CD8-positive, alpha-beta memory T cell (primary cell): ENCODE measurements at regions of chr12 and their contacts with region 1.

Region 1: GRCh38 chr12:110449799-110450497 is at the start of gene ARPC3:
- DNase-seq: peak; percentile 93 to 96 (median 93)
- H3K4me3 ChIP-seq: peak within 1 kb of the TSS; percentile 67
- H3K4me3 Mint-ChIP-seq: peak within 1 kb of the TSS; percentile 94 to 100 (median 99)
- H3K27ac ChIP-seq: peak within 1 kb of the TSS; percentile 88
- H3K27ac Mint-ChIP-seq: peak within 1 kb of the TSS; percentile 86 to 100 (median 99)
- H3K4me1 ChIP-seq: peaks cover 14% of the 10 kb centered on the region
- H3K4me1 Mint-ChIP-seq: peaks cover 33 to 50% (median 46%) of the 10 kb centered on the region in 3 donors
- H3K27me3 ChIP-seq: no peaks in the 10 kb centered on the region
- H3K27me3 Mint-ChIP-seq: peaks cover 0 to 4% of the 10 kb centered on the region in 2 donors
- total RNA-seq, gene ARPC3: 266 to 293 TPM

Region 2: DNA sequence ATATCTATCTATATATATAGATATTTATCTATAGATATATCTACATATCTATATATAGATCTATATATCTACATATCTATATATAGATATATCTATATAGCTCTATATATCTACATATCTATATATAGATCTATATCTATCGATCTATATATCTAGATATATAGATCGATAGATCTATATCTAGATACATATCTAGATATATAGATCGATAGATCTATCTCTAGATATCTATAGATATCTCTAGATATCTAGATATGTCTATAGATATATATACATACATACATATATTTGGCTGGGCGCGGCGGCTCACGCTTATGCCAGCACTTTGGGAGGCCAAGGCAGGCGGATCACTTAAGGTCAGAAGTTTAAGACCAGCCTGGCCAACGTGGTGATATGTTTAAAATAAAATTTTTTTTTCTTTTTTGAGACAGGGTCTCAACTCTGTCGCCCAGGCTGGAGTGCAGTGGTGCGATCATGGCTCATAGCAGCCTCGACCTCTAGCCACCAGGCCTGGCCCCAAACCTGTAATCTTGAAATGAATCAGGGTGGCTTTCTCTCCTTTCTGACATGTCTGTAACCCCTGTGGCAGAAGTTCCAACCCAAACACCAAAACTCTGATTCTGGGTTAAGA is 17.9 kb before region 1 on chr12:
- CTCF ChIA-PET with region 1: interaction called, 22 read pairs
- POLR2A ChIA-PET with region 1: interaction called, 12 read pairs
- DNase-seq: no peak
- H3K4me3 ChIP-seq: no peak overlapping the region
- H3K4me3 Mint-ChIP-seq: peak overlapping the region in 3 of 7 donors; percentile 96 to 100 (median 97)
- H3K27ac ChIP-seq: no peak overlapping the region
- H3K27ac Mint-ChIP-seq: peak overlapping the region in 2 of 8 donors; percentile 6 to 89
- H3K4me1 ChIP-seq: no peaks in the 10 kb centered on the region
- H3K4me1 Mint-ChIP-seq: peaks cover 0 to 3% (median 3%) of the 10 kb centered on the region in 3 donors
- H3K27me3 ChIP-seq: no peaks in the 10 kb centered on the region
- H3K27me3 Mint-ChIP-seq: no peaks in the 10 kb centered on the region

Region 3: DNA sequence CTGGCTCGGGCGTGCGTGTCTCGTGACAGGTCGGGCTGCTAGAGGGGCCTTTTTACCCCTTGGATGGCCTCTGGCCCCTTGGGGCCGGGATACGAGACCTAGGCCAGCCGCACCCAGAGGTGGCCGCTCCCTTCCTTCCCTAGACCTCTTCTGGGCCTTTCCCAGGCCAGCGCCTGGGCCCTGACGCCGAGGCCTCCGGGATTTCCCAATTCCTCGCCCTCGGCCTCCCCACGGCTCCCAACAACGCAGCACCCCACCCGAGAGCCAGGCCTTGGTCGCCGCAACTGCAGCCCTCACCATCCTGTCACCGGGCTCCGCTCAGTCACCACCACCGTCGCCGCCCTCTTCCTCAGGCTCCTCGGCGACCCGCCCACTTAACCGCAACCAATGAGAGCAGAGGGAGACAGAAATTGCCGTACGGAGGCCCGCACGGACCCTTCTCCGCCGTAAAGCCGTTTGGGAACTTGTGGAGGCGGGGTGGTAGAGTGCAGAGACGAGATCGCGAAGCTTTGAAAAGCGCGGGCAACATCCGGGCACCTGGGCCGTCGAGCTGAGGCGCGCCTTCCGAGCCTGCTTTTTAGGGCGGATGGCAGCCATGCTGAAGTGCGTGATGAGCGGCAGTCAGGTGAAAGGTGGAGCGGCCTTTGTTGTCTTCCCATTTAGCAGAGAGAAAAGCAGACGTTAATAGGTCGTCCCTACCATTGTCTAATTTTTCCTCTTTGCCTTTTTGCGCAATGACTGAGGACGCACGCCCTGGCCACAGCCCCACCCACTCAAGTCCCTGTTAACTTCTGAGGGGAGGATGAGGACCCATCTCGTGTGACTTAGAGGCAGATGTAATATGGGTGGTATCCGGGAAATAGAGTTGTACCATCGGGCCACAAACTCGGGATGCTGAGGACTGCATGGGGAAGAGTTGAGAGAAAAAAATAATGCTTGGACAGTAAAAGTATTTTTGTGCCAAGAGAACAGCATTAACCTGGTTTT is 52.1 kb after region 1 on chr12 and contains the starts of genes RAD9B and VPS29:
- CTCF ChIA-PET with region 1: interaction called, 20 read pairs
- POLR2A ChIA-PET with region 1: interaction called, 4 read pairs
- DNase-seq: peak; percentile 98 to 99 (median 99)
- H3K4me3 ChIP-seq: peak within 1 kb of the TSS; percentile 92
- H3K4me3 Mint-ChIP-seq: peak within 1 kb of the TSS; percentile 97 to 99 (median 97)
- H3K27ac ChIP-seq: peak within 1 kb of the TSS; percentile 86
- H3K27ac Mint-ChIP-seq: peak within 1 kb of the TSS; percentile 96 to 98 (median 97)
- H3K4me1 ChIP-seq: peaks cover 29% of the 10 kb centered on the region
- H3K4me1 Mint-ChIP-seq: peaks cover 36 to 50% (median 44%) of the 10 kb centered on the region in 3 donors
- H3K27me3 ChIP-seq: no peaks in the 10 kb centered on the region
- H3K27me3 Mint-ChIP-seq: peaks cover 0 to 3% of the 10 kb centered on the region in 2 donors
- total RNA-seq, gene RAD9B: 0.74 to 1.9 TPM
- total RNA-seq, gene VPS29: 86.4 to 88.3 TPM

Region 4: DNA sequence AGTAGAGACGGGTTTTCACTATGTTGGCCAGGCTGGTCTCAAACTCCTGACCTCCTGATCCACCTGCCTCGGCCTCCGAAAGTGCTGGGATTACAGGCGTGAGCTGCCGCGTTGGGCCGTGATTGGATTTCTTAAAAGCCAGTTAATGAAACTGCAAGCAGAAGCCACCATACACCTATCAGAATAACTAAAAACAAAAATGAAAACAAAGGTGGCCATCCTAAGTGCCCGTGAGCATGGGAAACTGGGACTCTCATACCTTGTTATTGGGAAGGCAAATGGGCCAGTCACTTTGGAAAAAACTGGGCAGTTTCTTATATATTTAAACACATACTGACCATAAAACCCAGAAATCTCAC is 156.3 kb after region 1 on chr12:
- CTCF ChIA-PET with region 1: interaction called, 119 read pairs
- POLR2A ChIA-PET with region 1: interaction called, 27 read pairs
- DNase-seq: no peak
- H3K4me3 ChIP-seq: peak overlapping the region; percentile 55
- H3K4me3 Mint-ChIP-seq: peak overlapping the region; percentile 77 to 93 (median 86)
- H3K27ac ChIP-seq: no peak overlapping the region
- H3K27ac Mint-ChIP-seq: peak overlapping the region in 4 of 8 donors; percentile 67 to 90 (median 87)
- H3K4me1 ChIP-seq: peaks cover 4% of the 10 kb centered on the region
- H3K4me1 Mint-ChIP-seq: peaks cover 6 to 9% (median 6%) of the 10 kb centered on the region in 3 donors
- H3K27me3 ChIP-seq: no peaks in the 10 kb centered on the region
- H3K27me3 Mint-ChIP-seq: no peaks in the 10 kb centered on the region

Region 5: GRCh38 chr12:110888256-110888991 is 438.5 kb after region 1 on chr12:
- CTCF ChIA-PET with region 1: interaction called, 10 read pairs
- POLR2A ChIA-PET with region 1: no interaction called
- DNase-seq: no peak
- H3K4me3 ChIP-seq: no peak overlapping the region
- H3K4me3 Mint-ChIP-seq: peak overlapping the region; percentile 86 to 95 (median 93)
- H3K27ac ChIP-seq: no peak overlapping the region
- H3K27ac Mint-ChIP-seq: peak overlapping the region in 2 of 8 donors; percentile 67 to 89
- H3K4me1 ChIP-seq: no peaks in the 10 kb centered on the region
- H3K4me1 Mint-ChIP-seq: peaks cover 3 to 7% (median 5%) of the 10 kb centered on the region in 3 donors
- H3K27me3 ChIP-seq: no peaks in the 10 kb centered on the region
- H3K27me3 Mint-ChIP-seq: peaks cover 8% of the 10 kb centered on the region in 2 donors

Region 6: GRCh38 chr12:111033281-111034082 is 583.5 kb after region 1 on chr12:
- CTCF ChIA-PET with region 1: no interaction called
- POLR2A ChIA-PET with region 1: no interaction called
- DNase-seq: peak in 1 of 5 donors; percentile 7
- H3K4me3 ChIP-seq: no peak overlapping the region
- H3K4me3 Mint-ChIP-seq: peak overlapping the region in 4 of 7 donors; percentile 20 to 47 (median 38)
- H3K27ac ChIP-seq: no peak overlapping the region
- H3K27ac Mint-ChIP-seq: no peak overlapping the region
- H3K4me1 ChIP-seq: peaks cover 24% of the 10 kb centered on the region
- H3K4me1 Mint-ChIP-seq: peaks cover 16 to 36% (median 18%) of the 10 kb centered on the region in 3 donors
- H3K27me3 ChIP-seq: peaks cover 57% of the 10 kb centered on the region
- H3K27me3 Mint-ChIP-seq: peaks cover 40 to 75% of the 10 kb centered on the region in 2 donors